ENCODE measurements at regions of chr16 and their contacts with region 1.

Region 1: GRCh38 chr16:24568392-24568791 is 29.0 kb downstream of the RBBP6 start:
- DNase-seq: no peak
- ATAC-seq: peak in 1 of 4 donors; percentile 32
- H3K4me3 ChIP-seq: no peak overlapping the region
- H3K27ac ChIP-seq: no peak overlapping the region
- H3K4me1 ChIP-seq: no peaks in the 10 kb centered on the region
- H3K27me3 ChIP-seq: no peaks in the 10 kb centered on the region
- CTCF ChIP-seq: no peak

Region 2: DNA sequence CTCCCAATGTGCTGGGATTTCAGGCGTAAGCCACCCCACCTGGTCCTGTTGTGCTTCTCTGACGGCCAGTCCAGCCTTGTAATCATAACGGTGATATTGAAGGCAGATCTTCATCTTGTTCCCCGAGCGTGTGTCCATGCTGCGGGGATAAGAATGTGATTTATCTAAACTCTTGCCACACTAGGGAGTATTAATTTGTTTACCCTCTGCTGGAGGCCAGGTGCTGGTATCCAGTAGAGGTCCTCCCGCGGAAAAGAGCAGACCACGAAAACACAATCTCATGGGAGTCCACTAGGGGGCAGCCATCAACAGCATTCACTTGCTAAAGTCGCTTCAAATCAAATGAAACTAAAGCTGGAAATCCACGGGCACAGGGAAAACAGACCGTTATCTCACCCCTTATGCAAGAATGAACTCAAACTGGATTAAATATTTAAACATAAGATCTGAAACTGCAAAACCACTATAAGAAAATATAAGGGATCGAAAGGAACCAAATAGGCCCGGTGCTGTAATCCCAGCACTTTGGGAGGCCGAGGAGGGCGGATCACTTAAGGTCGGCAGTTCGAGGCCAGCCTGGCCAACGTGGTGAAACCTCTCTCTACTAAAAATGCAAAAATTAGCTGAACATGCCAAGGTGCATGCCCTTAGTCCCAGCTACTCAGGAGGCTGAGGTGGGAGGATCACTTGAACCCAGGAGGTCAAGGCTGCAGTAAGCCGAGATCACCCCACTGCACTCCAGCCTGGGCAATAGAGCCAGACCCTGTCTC is 51.3 kb before region 1 on chr16:
- intact Hi-C with region 1: no loop called
- DNase-seq: peak; percentile 73 to 90 (median 78)
- ATAC-seq: peak; percentile 96 to 100 (median 98)
- H3K4me3 ChIP-seq: peak overlapping the region in 1 of 4 donors; percentile 15
- H3K27ac ChIP-seq: no peak overlapping the region
- H3K4me1 ChIP-seq: no peaks in the 10 kb centered on the region
- H3K27me3 ChIP-seq: no peaks in the 10 kb centered on the region
- CTCF ChIP-seq: peak; percentile 70 to 91 (median 87)

Region 3: GRCh38 chr16:24609740-24610415 is 41.5 kb after region 1 on chr16:
- intact Hi-C with region 1: no loop called
- DNase-seq: peak; percentile 4 to 76 (median 54)
- ATAC-seq: peak; percentile 58 to 61 (median 60)
- H3K4me3 ChIP-seq: peak overlapping the region in 1 of 4 donors; percentile 27
- H3K27ac ChIP-seq: no peak overlapping the region
- H3K4me1 ChIP-seq: no peaks in the 10 kb centered on the region
- H3K27me3 ChIP-seq: no peaks in the 10 kb centered on the region
- CTCF ChIP-seq: no peak

Region 4: DNA sequence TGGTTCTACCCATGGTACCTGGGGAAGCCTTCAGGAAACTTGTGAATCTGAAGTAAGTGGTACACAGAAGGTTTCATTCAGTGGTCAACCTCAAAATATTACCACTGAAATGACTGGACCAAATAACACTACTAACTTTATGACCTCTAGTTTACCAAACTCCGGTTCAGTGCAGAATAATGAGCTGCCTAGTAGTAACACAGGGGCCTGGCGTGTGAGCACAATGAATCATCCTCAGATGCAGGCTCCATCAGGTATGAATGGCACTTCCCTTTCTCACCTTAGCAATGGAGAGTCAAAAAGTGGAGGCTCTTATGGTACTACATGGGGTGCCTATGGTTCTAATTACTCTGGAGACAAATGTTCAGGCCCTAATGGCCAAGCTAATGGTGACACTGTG is 221.5 kb after region 1 on chr16:
- intact Hi-C with region 1: loop called in 1 of 3 experiments (anchors 10 kb)
- DNase-seq: no peak
- ATAC-seq: no peak
- H3K4me3 ChIP-seq: no peak overlapping the region
- H3K27ac ChIP-seq: no peak overlapping the region
- H3K4me1 ChIP-seq: no peaks in the 10 kb centered on the region
- H3K27me3 ChIP-seq: no peaks in the 10 kb centered on the region
- CTCF ChIP-seq: no peak

Region 5: GRCh38 chr16:24810951-24811843 is 242.8 kb after region 1 on chr16:
- intact Hi-C with region 1: loop called in 1 of 3 experiments (anchors 10 kb)
- DNase-seq: no peak
- ATAC-seq: peak in 2 of 4 donors; percentile 35 to 49
- H3K4me3 ChIP-seq: no peak overlapping the region
- H3K27ac ChIP-seq: no peak overlapping the region
- H3K4me1 ChIP-seq: no peaks in the 10 kb centered on the region
- H3K27me3 ChIP-seq: no peaks in the 10 kb centered on the region
- CTCF ChIP-seq: no peak